ENCODE measurements at regions of chr10 and their contacts with region 1.

Region 1: DNA sequence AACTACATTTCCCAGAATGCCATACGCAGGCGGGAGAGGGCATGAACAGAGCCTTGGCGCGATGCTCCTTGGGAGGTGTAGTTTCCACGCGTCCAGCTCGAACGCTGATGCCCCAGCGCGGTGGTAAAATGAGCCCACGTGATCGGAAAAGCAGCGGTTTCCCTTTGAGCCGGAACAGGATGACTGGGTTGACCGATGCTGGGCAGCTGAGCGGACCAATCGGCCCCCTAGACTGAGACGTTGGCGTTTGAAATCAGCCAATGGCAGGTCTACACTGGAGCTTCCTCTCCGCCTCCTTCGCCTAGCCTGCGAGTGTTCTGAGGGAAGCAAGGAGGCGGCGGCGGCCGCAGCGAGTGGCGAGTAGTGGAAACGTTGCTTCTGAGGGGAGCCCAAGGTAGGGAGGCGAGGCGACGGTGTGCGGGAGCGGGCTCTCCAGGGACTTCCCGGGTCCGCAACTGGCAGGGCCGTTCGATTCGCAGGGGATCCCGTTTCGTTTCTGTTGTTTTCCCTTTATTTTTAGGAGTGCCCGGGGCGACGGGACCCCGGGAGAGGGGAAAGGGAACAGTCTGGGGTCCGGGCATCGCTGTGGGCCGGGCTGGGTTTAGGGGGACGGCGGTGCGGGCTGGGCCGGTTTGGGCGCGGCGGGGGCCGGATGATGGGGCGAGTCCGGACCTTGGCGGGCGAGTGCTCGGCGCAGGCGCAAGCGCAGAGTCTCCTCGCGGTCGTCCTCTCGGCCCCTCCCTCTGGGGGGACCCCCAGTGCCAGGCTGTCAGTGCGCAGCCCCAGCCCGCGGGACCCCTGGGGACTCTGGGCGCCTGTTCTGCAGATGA is at the start of gene BUB3:
- DNase-seq: peak; percentile 98
- H3K4me3 ChIP-seq: peak within 1 kb of the TSS; percentile 95
- H3K27ac ChIP-seq: peak within 1 kb of the TSS; percentile 86
- H3K4me1 ChIP-seq: peaks cover 19% of the 10 kb centered on the region
- H3K27me3 ChIP-seq: peaks cover 29% of the 10 kb centered on the region
- CTCF ChIP-seq: no peak
- total RNA-seq, gene BUB3: 77.6 to 112 TPM

Region 2: DNA sequence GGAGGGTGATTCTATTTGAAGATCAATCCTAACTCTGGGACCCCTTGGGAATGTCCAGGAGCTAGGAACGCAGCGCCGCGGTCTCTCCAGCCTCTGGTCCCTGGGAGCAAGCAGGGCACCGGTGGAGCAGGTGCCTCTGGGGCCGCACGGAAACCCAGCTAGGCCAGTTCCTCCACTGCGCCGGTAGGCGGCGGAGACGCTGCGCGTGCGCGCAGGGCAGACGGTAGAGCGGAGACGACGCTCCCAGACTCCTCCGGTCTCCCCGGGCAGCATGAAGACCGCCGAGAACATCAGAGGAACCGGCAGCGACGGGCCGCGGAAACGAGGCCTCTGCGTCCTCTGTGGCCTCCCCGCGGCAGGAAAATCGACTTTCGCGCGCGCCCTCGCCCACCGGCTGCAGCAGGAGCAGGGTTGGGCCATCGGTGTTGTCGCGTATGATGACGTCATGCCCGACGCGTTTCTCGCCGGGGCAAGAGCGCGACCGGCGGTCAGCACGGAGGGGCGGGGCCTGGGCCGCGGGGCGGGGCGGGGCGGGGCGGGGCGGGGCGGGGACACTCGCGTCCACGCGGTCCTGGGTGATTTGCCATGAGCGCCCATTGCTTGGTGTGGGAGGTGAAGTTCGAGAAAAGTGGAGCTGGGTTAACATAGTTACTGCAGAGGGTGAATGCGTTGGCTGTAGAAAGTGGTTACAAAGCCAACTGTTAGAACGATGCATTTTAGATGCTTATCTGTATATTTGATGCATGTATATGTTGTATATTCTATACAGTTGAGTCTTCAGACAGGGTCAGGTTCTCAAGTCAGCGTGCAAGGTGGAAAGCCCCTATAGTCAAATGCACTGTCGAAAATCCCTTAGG is 173.9 kb before region 1 on chr10 and contains the start of gene PSTK:
- intact Hi-C with region 1: loop called (anchors 10 kb)
- DNase-seq: peak; percentile 91
- H3K4me3 ChIP-seq: peak within 1 kb of the TSS; percentile 67
- H3K27ac ChIP-seq: peak within 1 kb of the TSS; percentile 91
- H3K4me1 ChIP-seq: peaks cover 4% of the 10 kb centered on the region
- H3K27me3 ChIP-seq: no peaks in the 10 kb centered on the region
- CTCF ChIP-seq: peak; percentile 97
- total RNA-seq, gene PSTK: 1.7 to 2.6 TPM

Region 3: DNA sequence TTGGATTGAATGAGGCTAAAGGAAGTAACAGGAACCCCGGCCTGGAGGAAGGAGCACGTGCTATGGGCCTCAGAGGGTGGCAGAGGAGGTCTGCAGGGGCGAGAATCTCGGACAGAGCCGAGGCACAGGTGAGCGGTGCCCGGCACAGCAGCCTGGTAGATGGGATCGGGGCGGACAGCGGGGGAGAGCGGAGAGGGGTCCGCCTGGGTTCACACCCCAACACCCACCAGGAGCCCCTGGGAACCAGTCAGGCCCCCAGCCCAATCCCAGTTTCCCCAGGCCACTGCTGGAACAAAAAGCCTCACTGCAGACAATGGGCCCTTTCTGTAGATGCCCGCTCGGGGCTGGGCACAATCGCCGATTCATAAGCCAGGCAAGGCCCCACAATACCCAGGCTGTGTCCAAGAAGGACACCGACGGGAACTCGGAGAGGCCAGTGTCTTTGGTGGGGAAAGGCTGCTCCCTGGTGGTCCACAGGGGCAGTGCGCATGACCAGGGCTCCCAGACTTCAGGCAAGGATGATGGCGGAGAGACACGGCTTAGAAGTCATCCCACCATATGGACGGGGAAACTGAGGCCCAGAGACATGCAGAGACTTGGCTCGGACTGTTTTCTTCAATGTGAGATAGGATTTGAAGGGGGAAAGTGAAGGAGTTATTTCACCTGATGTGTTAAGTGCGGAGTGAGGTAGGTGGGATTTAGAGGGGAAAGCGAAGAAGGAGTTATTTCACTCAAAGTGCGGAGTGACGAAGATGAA is 404.9 kb after region 1 on chr10:
- intact Hi-C with region 1: no loop called
- DNase-seq: peak; percentile 67
- H3K4me3 ChIP-seq: no peak overlapping the region
- H3K27ac ChIP-seq: no peak overlapping the region
- H3K4me1 ChIP-seq: no peaks in the 10 kb centered on the region
- H3K27me3 ChIP-seq: no peaks in the 10 kb centered on the region
- CTCF ChIP-seq: peak; percentile 98